Activated CD4-positive, alpha-beta T cell treated with anti-CD3 and anti-CD28 coated beads, Interleukin-2, amount 10 ng/mL, durations not matched to agents 24 days and 14 days (primary cell): ENCODE measurements at regions of chr6 and their contacts with region 1.

Region 1: DNA sequence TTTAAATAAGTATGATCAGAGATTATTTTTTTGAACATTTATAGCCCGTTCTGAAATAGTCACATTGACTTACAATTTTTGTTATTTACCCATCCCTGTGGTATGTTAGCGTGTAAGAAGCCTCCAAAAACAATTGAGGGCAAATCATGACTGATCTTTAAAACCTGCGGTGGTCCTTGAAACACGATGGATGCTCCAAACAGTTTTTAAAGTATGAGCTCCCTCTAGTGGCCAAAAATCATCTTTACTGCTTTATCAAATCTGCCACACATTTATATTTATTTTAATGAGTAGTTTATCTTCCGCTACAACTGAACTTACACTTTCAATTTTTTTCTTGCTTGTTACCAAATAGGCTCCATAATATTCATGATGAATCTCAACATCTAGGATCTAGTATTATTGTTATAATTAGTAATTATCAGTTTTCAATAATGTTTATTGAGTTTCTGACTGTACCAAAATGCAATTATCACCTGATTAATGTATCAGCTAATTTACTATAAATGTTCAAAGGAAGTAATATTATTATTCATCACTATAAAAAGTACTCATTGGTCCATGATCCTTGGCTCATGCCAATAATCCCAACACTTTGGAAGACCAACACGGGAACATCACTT is 52.2 kb downstream of the MARCKS start:
- DNase-seq: peak; percentile 67
- H3K4me3 Mint-ChIP-seq: no peak overlapping the region
- H3K27ac Mint-ChIP-seq: no peak overlapping the region
- H3K4me1 Mint-ChIP-seq: peaks cover 2% of the 10 kb centered on the region
- H3K27me3 Mint-ChIP-seq: peaks cover 18% of the 10 kb centered on the region

Region 2: GRCh38 chr6:112780498-112781096 is 1128.7 kb before region 1 on chr6:
- intact Hi-C with region 1: loop called (anchors 1 kb)
- DNase-seq: peak; percentile 70
- H3K4me3 Mint-ChIP-seq: no peak overlapping the region
- H3K27ac Mint-ChIP-seq: no peak overlapping the region
- H3K4me1 Mint-ChIP-seq: no peaks in the 10 kb centered on the region
- H3K27me3 Mint-ChIP-seq: no peaks in the 10 kb centered on the region

Region 3: DNA sequence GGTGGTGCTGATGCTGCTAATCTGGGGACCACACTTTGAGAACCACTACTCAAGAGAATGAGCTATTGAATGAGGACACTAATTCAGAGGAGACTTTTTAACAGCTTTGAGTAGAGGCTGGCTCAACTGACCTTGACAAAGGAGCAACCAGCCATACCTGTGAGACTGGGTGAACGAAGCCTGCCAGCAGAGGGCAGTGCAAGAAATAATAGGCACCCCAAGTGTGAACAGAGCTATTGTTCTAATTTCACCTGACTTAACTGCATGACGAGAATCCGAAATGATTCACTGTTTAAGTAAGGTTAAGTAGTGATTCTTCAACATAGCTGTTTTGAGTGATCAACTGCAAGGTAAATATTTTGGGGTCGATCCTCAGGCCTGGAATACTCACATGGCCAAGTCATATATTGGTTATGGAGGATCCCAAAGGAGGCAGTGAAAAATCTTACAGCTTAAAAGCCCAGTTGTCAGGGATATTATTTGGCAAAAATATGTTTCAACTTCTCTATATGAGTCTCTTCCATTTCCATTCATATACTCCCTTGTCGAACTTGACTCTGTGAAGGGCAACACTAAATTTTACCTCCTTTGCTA is 602.7 kb before region 1 on chr6:
- intact Hi-C with region 1: loop called (anchors 1 kb)
- DNase-seq: peak; percentile 80
- H3K4me3 Mint-ChIP-seq: no peak overlapping the region
- H3K27ac Mint-ChIP-seq: no peak overlapping the region
- H3K4me1 Mint-ChIP-seq: no peaks in the 10 kb centered on the region
- H3K27me3 Mint-ChIP-seq: no peaks in the 10 kb centered on the region